PC-3 (cell line): ENCODE measurements at regions of chr4 and their contacts with region 1.

Region 1: GRCh38 chr4:93897559-93897958 is 69.0 kb downstream of the ATOH1 start:
- DNase-seq: peak; percentile 42
- ATAC-seq: peak; percentile 50; the same call in 1 of the 2 replicates
- H3K4me3 ChIP-seq: no peak overlapping the region
- H3K27ac ChIP-seq: no peak overlapping the region
- H3K4me1 ChIP-seq: no peaks in the 10 kb centered on the region
- H3K27me3 ChIP-seq: peaks cover 62% of the 10 kb centered on the region
- CTCF ChIP-seq: peak; percentile 57

Region 2: GRCh38 chr4:94127707-94128328 is 230.3 kb after region 1 on chr4:
- CTCF ChIA-PET with region 1: interaction called, 3 read pairs
- POLR2A ChIA-PET with region 1: no interaction called
- intact Hi-C with region 1: loop called (anchors 1 kb)
- DNase-seq: peak; percentile 33
- ATAC-seq: peak; percentile 34; the same call in 1 of the 2 replicates
- H3K4me3 ChIP-seq: no peak overlapping the region
- H3K27ac ChIP-seq: no peak overlapping the region
- H3K4me1 ChIP-seq: no peaks in the 10 kb centered on the region; the same call in 1 of the 2 replicates
- H3K27me3 ChIP-seq: peaks cover 17% of the 10 kb centered on the region
- CTCF ChIP-seq: peak; percentile 67